ENCODE measurements at regions of chr14 and their contacts with region 1.

Region 1: GRCh38 chr14:61598980-61599379 is 96.3 kb upstream of the HIF1A start:
- DNase-seq: peak; percentile 81
- H3K4me3 Mint-ChIP-seq: peak overlapping the region; percentile 31
- H3K27ac Mint-ChIP-seq: peak overlapping the region; percentile 79
- H3K4me1 Mint-ChIP-seq: peaks cover 40% of the 10 kb centered on the region
- H3K27me3 Mint-ChIP-seq: no peaks in the 10 kb centered on the region

Region 2: DNA sequence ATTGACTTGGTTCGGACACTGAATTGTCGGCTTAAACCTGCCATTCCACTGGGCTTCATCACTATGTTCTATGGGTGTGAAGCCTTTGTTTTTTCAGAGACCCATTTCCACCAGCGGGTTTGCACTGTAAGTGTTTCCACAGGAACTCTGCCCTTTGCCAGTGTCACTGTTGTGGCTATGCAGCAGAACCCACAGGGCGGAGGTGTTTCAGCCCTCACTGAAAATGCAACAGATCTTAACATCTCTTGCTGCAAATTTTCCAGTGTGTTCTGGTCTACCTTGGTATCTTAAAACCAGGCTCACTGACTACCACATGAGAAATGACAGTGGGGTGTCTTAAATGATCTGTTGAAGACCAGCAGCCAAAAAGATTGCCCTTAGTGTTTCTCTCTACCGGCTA is 256.5 kb before region 1 on chr14:
- intact Hi-C with region 1: loop called (anchors 10 kb)
- DNase-seq: peak; percentile 96
- H3K4me3 Mint-ChIP-seq: peak overlapping the region; percentile 86
- H3K27ac Mint-ChIP-seq: peak overlapping the region; percentile 95
- H3K4me1 Mint-ChIP-seq: peaks cover 80% of the 10 kb centered on the region
- H3K27me3 Mint-ChIP-seq: no peaks in the 10 kb centered on the region

Region 3: DNA sequence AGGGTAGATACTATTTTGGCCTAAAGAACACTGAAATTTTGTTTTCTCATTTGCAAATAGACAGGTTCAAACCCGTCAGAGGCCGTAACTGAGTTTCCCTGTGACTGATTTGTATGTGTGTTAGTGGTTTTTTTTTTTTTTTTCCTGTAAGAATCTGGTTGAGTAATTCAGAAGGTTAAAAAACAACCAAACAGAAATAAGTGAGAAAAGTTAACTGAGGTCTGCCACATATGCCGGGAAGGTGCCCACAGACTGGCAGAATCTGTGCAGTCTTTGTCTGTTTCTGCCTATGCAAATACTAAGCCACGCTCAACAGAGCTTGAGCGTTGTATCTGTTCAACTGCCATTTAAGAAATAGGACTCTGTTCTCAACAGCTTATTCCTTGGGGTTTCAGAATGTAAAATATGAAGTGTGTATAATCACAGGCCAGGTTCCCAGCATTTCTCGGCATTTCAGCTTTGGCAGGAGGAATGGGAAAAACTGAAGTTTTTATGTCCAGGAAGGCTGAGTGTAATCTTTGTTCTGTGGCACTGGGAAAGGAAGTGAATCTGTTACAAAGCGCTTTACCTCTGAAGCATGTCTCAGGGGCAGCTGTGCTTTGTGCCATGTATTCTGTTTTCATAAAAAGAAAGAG is 95.7 kb before region 1 on chr14:
- intact Hi-C with region 1: loop called (anchors 1 kb)
- DNase-seq: peak; percentile 84
- H3K4me3 Mint-ChIP-seq: peak overlapping the region; percentile 76
- H3K27ac Mint-ChIP-seq: peak overlapping the region; percentile 95
- H3K4me1 Mint-ChIP-seq: peaks cover 79% of the 10 kb centered on the region
- H3K27me3 Mint-ChIP-seq: no peaks in the 10 kb centered on the region

Region 4: DNA sequence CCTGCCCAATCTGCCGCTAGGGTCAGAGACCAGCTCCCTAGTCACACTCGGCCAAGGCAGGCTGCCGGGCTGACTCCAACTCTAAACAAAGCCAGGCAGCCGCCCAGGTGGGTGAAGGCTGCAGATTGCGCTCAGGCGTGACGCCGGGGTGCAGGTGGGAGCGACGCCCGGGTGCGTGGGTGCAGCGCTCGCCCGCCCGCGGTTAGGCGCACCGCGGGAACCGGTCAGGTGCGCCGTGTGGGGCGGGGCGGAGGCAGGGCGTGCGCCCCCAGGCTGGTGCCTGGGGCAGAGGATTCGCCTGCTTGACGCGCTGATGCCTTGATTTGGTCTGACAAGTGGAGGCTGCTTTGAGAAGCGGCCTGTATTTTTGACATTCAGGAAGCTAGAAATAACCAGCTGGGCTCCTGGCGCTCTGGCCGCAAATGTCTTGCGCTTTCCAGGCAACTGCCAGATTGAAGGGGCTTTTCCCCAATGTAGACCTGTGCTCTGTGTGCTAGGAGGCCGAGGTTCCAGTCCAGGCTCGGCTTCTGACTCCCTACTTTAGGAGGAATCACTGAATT is 30.3 kb before region 1 on chr14:
- intact Hi-C with region 1: loop called (anchors 1 kb)
- DNase-seq: peak; percentile 88
- H3K4me3 Mint-ChIP-seq: peak overlapping the region; percentile 77
- H3K27ac Mint-ChIP-seq: peak overlapping the region; percentile 56
- H3K4me1 Mint-ChIP-seq: peaks cover 77% of the 10 kb centered on the region
- H3K27me3 Mint-ChIP-seq: peaks cover 4% of the 10 kb centered on the region

Region 5: GRCh38 chr14:61620130-61620946 is 21.4 kb after region 1 on chr14:
- intact Hi-C with region 1: loop called (anchors 1 kb)
- DNase-seq: peak; percentile 69
- H3K4me3 Mint-ChIP-seq: peak overlapping the region; percentile 39
- H3K27ac Mint-ChIP-seq: peak overlapping the region; percentile 74
- H3K4me1 Mint-ChIP-seq: peaks cover 34% of the 10 kb centered on the region
- H3K27me3 Mint-ChIP-seq: no peaks in the 10 kb centered on the region

Region 6: DNA sequence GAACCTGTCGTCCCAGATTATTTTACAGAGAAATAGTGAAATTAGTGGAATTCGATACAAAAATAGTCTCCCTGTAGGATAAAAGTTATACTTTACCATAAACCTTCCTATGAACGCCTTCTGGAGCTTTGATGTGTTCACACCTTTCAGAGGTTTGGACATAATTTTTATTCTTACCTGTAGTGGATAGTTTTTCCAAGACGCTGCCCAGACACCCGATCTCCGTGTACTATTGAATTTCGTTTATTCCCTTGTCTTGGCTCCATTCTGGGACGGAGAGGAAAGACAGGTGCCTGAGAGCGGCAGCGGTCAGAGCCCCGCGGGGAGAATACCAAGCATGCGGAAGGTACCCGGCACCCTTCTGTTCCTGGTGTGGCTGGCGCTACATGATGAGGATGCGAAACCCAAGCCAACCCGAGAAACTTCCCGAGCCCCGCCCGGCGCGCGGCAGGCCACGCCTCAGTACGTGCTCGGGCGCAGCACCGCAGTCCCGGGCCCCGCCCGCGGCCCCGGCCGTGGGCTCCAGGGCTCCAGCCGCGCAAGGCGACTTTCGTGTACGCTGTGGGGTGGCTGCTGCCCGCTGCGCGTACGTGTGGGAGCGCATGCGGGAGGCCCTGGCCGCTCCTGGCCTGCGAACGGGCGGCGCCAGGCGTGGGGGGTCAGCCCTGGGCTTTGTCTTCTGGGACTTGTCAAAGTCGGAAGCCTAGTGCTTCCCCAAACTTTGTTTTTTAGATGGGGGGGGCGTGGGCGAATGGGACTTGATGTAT is 151.9 kb after region 1 on chr14:
- intact Hi-C with region 1: no loop called
- DNase-seq: peak; percentile 97
- H3K4me3 Mint-ChIP-seq: peak overlapping the region; percentile 98
- H3K27ac Mint-ChIP-seq: peak overlapping the region; percentile 94
- H3K4me1 Mint-ChIP-seq: peaks cover 49% of the 10 kb centered on the region
- H3K27me3 Mint-ChIP-seq: no peaks in the 10 kb centered on the region

Measured in activated CD4-positive, alpha-beta T cell treated with anti-CD3 and anti-CD28 coated beads, Interleukin-2, amount 10 ng/mL, durations not matched to agents 24 days and 14 days (primary cell).